HCT116 (cell line): ENCODE measurements at regions of chr7 and their contacts with region 1.

Region 1: DNA sequence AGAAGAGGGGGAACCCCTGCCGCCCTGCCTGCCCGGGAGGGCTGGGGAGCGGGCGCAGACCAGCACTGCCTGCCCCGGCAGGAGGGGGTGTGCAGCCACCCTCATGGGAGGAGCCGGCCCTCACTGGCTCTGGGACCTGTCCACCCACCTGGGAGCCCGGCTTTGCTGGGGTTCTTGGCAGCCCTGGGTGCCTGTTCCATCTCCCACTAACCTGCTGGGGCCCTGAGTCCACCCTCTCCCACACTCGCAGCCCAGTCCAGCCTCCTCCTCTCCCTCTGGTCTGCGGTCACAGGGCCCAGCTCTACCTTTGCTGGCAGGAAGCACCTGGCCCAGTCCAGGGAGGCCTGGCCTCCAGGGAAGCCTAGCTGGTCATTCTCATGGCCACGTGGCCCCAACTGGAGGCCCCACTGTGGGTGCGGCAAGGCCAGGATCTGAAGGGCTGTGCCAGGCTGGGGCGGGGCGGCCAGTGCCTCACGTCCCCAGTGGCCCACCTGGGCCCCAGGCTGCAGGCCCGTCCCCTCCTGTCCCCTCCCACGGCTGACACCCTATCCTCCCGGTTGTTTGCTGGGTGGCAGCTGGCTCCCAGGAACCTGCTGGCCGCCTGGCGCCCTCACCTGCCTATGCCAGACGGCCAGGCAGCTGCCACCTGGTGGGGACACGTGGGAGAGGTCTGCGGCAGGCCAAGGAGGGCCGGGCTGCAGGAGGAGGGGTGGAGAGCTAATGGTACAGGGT is at the start of gene TMEM184A:
- DNase-seq: peak; percentile 89
- ATAC-seq: peak; percentile 72
- H3K4me3 ChIP-seq: peak within 1 kb of the TSS; percentile 61 to 66
- H3K27ac ChIP-seq: peak within 1 kb of the TSS; percentile 99
- H3K4me1 ChIP-seq: peaks cover 32 to 62% of the 10 kb centered on the region in 2 experiments
- H3K27me3 ChIP-seq: no peaks in the 10 kb centered on the region
- CTCF ChIP-seq: peak in 2 of 3 experiments; percentile 66 to 81; a peak in 4 of 6 replicates
- POLR2A ChIP-seq: peak; percentile 53
- RAD21 ChIP-seq: no peak
- total RNA-seq, gene TMEM184A: 34.8 TPM

Region 2: DNA sequence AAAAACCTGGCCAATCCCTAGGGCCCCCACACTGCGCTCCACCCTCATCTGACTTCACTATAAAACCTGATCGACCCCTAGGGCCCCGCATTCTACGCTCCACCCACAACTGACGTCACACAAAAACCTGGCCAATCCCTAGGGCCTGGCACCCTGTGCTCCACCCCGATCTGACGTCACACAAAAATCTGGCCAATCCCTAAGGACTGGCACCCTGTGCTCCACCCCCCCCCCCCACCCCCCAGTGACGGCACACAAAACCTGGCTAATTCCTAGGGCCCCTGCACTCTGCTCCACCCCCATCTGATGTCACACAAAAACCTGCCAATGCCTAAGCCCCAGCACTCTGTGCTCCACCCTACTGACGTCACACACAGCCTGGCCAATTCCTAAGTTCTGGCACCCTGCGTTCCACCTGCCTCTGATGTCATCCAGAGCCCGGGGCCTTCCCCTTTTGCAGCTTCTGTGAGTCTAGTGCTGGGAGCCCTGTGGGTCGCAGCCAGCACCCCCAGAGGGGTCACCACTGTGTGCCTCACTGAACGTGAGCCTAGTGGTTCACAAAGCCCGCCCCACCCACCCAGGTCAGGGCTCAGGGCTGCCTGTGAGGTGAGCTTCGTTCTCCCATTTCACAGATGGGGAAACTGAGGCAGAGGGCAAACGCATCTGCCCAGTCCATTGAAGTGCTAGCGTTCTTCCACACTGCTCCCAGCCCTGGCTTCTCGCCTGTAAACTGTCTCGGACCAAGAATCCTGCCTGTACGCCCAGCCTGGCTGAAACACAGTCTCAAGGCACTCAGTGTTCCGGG is 137.3 kb before region 1 on chr7:
- CTCF ChIA-PET with region 1: no interaction called
- POLR2A ChIA-PET with region 1: no interaction called
- RAD21 ChIA-PET with region 1: no interaction called
- intact Hi-C with region 1: loop called (anchors 2 kb)
- DNase-seq: peak; percentile 94
- ATAC-seq: peak; percentile 86
- H3K4me3 ChIP-seq: no peak overlapping the region
- H3K27ac ChIP-seq: no peak overlapping the region
- H3K4me1 ChIP-seq: peaks cover 0 to 18% of the 10 kb centered on the region in 2 experiments; a peak in 3 of 4 replicates
- H3K27me3 ChIP-seq: no peaks in the 10 kb centered on the region
- CTCF ChIP-seq: no peak
- POLR2A ChIP-seq: no peak
- RAD21 ChIP-seq: no peak

Region 3: GRCh38 chr7:1503816-1504775 is 51.9 kb before region 1 on chr7 and contains the start of gene INTS1:
- CTCF ChIA-PET with region 1: interaction called, 31 read pairs
- POLR2A ChIA-PET with region 1: interaction called, 13 read pairs
- RAD21 ChIA-PET with region 1: interaction called in 1 of 2 experiments, 7 read pairs
- intact Hi-C with region 1: loop called (anchors 1 kb)
- DNase-seq: peak; percentile 90
- ATAC-seq: peak; percentile 93
- H3K4me3 ChIP-seq: peak within 1 kb of the TSS; percentile 65 to 97
- H3K27ac ChIP-seq: peak within 1 kb of the TSS; percentile 79
- H3K4me1 ChIP-seq: peaks cover 37 to 43% of the 10 kb centered on the region in 2 experiments
- H3K27me3 ChIP-seq: no peaks in the 10 kb centered on the region
- CTCF ChIP-seq: peak in 2 of 3 experiments; percentile 73 to 81; a peak in 4 of 6 replicates
- POLR2A ChIP-seq: peak; percentile 54
- RAD21 ChIP-seq: no peak
- total RNA-seq, gene INTS1: 167 TPM

Region 4: GRCh38 chr7:1532483-1533424 is 23.2 kb before region 1 on chr7:
- CTCF ChIA-PET with region 1: interaction called, 10 read pairs
- POLR2A ChIA-PET with region 1: interaction called, 5 read pairs
- RAD21 ChIA-PET with region 1: interaction called in 1 of 2 experiments, 3 read pairs
- intact Hi-C with region 1: loop called (anchors 1 kb)
- DNase-seq: peak; percentile 43
- ATAC-seq: peak; percentile 23
- H3K4me3 ChIP-seq: peak overlapping the region; percentile 78 to 82
- H3K27ac ChIP-seq: peak overlapping the region; percentile 92
- H3K4me1 ChIP-seq: peaks cover 48 to 80% of the 10 kb centered on the region in 2 experiments
- H3K27me3 ChIP-seq: no peaks in the 10 kb centered on the region
- CTCF ChIP-seq: no peak
- POLR2A ChIP-seq: no peak
- RAD21 ChIP-seq: no peak

Region 5: GRCh38 chr7:1537535-1538412 is 18.2 kb before region 1 on chr7:
- CTCF ChIA-PET with region 1: interaction called, 10 read pairs
- POLR2A ChIA-PET with region 1: interaction called, 5 read pairs
- RAD21 ChIA-PET with region 1: interaction called in 1 of 2 experiments, 3 read pairs
- intact Hi-C with region 1: loop called (anchors 1 kb)
- DNase-seq: no peak
- ATAC-seq: peak; percentile 14; the same call in 1 of the 2 replicates
- H3K4me3 ChIP-seq: peak overlapping the region; percentile 38 to 49
- H3K27ac ChIP-seq: peak overlapping the region; percentile 83
- H3K4me1 ChIP-seq: peaks cover 43 to 54% of the 10 kb centered on the region in 2 experiments
- H3K27me3 ChIP-seq: no peaks in the 10 kb centered on the region
- CTCF ChIP-seq: no peak
- POLR2A ChIP-seq: no peak
- RAD21 ChIP-seq: no peak